PC-3 (cell line): ENCODE measurements at regions of chr11 and their contacts with region 1.

Region 1: DNA sequence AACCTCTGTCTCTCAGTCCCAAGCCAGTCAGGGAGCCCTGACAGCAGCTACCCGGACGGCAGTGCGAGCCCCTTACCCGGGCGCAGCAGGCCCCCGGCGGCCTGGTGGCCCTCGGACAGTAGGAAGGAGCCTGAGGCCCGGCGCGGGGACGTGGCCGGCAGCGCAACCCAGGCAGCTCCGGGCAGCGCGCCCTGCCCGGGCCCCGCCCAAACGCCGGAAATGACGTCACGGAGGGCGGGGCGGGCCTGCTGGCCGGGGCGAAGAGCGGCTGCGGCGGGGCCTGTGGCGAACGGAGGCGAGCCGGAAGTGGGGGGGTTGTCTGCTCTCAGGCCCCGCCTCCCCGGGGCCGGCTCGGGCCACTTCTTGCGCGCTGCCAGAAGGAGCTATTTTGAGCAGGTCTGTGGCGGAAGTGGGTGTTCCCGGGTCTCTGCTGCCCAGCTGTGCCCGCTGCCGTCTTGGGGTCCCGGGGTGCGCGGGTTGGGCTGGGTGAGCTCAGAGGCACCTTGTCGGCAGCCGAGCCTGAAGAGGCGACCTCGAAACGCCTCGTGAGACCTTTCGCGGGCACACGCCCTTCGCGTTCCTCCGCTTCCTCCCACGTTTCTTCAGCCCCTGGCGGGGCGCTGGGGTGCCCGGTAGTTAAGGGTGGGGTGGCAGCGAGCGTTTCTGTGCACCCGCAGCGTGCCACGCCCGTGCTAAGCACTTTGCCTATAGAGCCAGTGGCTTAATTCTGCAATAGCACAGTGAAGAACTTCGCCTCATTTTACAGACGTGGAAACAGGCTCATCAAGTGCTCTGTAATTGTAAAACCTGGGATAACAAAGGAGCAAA is at the start of gene C11orf24:
- DNase-seq: peak; percentile 98
- ATAC-seq: peak; percentile 92
- H3K4me3 ChIP-seq: peak within 1 kb of the TSS; percentile 89
- H3K27ac ChIP-seq: peak within 1 kb of the TSS; percentile 76
- H3K4me1 ChIP-seq: peaks cover 22% of the 10 kb centered on the region
- H3K27me3 ChIP-seq: no peaks in the 10 kb centered on the region
- CTCF ChIP-seq: no peak
- total RNA-seq, gene C11orf24: 74.9 and 75.9 TPM in 2 replicates

Region 2: GRCh38 chr11:68297812-68298658 is 26.0 kb after region 1 on chr11:
- CTCF ChIA-PET with region 1: interaction called, 7 read pairs
- POLR2A ChIA-PET with region 1: interaction called, 3 read pairs
- intact Hi-C with region 1: loop called (anchors 1 kb)
- DNase-seq: peak; percentile 89
- ATAC-seq: peak; percentile 97
- H3K4me3 ChIP-seq: peak overlapping the region; percentile 52
- H3K27ac ChIP-seq: no peak overlapping the region
- H3K4me1 ChIP-seq: peaks cover 16% of the 10 kb centered on the region
- H3K27me3 ChIP-seq: no peaks in the 10 kb centered on the region
- CTCF ChIP-seq: peak; percentile 98

Region 3: DNA sequence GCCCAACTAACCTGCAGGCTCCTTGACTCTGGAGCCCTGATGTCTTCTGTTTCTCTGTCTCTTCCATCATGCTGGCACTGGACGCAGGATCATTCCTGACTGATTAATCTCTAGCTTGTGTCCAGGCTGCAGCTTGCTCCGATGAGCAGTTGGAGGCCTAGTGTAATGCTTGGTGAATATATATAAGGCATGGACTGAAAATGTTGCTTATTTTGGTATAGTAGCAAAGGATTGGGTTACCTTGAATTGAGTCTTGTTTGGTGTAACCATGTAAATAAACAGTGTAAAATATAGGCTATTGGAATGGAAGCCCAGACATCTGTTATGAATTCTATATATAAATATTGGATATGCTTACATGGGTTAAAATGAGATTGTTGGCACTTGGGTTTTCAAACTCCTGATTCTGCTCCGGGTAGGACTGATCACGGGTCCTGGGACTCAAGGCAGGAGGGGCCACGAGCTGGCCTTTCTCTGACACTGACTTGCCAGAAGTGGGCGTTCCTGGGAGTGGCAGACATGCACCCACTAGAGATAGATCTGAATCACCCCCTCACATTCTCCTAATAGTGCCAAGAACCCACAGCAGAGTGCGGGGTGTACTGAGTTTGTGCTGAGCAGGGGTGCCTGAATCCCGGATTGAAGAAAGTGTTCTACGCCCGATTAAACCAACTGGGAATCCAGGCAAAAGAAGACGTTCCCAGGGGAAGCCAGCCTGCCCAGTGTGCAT is 66.2 kb after region 1 on chr11:
- CTCF ChIA-PET with region 1: no interaction called
- POLR2A ChIA-PET with region 1: no interaction called
- intact Hi-C with region 1: no loop called
- DNase-seq: no peak
- ATAC-seq: no peak
- H3K4me3 ChIP-seq: no peak overlapping the region
- H3K27ac ChIP-seq: no peak overlapping the region
- H3K4me1 ChIP-seq: peaks cover 32% of the 10 kb centered on the region
- H3K27me3 ChIP-seq: no peaks in the 10 kb centered on the region
- CTCF ChIP-seq: no peak

Region 4: GRCh38 chr11:68552542-68552941 is 280.5 kb after region 1 on chr11:
- CTCF ChIA-PET with region 1: no interaction called
- POLR2A ChIA-PET with region 1: interaction called, 13 read pairs
- intact Hi-C with region 1: no loop called
- DNase-seq: no peak
- ATAC-seq: no peak
- H3K4me3 ChIP-seq: no peak overlapping the region
- H3K27ac ChIP-seq: no peak overlapping the region
- H3K4me1 ChIP-seq: no peaks in the 10 kb centered on the region
- H3K27me3 ChIP-seq: no peaks in the 10 kb centered on the region
- CTCF ChIP-seq: no peak